ENCODE measurements at regions of chr12 and their contacts with region 1.

Region 1: GRCh38 chr12:95473884-95474659 is at the start of gene METAP2:
- DNase-seq: peak; percentile 97
- ATAC-seq: peak; percentile 97
- H3K4me3 Mint-ChIP-seq: peak within 1 kb of the TSS; percentile 88
- H3K27ac Mint-ChIP-seq: peak within 1 kb of the TSS; percentile 99
- H3K4me1 Mint-ChIP-seq: peaks cover 41% of the 10 kb centered on the region
- H3K27me3 Mint-ChIP-seq: no peaks in the 10 kb centered on the region
- CTCF ChIP-seq: no peak
- total RNA-seq, gene METAP2: 129 to 133 TPM

Region 2: GRCh38 chr12:95072900-95073697 is 401.0 kb before region 1 on chr12 and contains the start of gene NR2C1:
- CTCF ChIA-PET with region 1: no interaction called
- POLR2A ChIA-PET with region 1: interaction called, 12 read pairs
- intact Hi-C with region 1: no loop called
- DNase-seq: peak; percentile 43
- ATAC-seq: peak; percentile 99
- H3K4me3 Mint-ChIP-seq: peak within 1 kb of the TSS; percentile 90
- H3K27ac Mint-ChIP-seq: peak within 1 kb of the TSS; percentile 92
- H3K4me1 Mint-ChIP-seq: peaks cover 17% of the 10 kb centered on the region
- H3K27me3 Mint-ChIP-seq: no peaks in the 10 kb centered on the region
- CTCF ChIP-seq: no peak
- total RNA-seq, gene NR2C1: 24.9 to 32.4 TPM

Region 3: GRCh38 chr12:95217377-95218149 is 256.5 kb before region 1 on chr12 and contains the starts of genes FGD6 and VEZT:
- CTCF ChIA-PET with region 1: no interaction called
- POLR2A ChIA-PET with region 1: interaction called, 10 read pairs
- intact Hi-C with region 1: loop called (anchors 5 kb)
- DNase-seq: peak; percentile 99
- ATAC-seq: peak; percentile 95
- H3K4me3 Mint-ChIP-seq: peak within 1 kb of the TSS; percentile 89
- H3K27ac Mint-ChIP-seq: peak within 1 kb of the TSS; percentile 98
- H3K4me1 Mint-ChIP-seq: peaks cover 33% of the 10 kb centered on the region
- H3K27me3 Mint-ChIP-seq: peaks cover 6% of the 10 kb centered on the region
- CTCF ChIP-seq: peak; percentile 54
- total RNA-seq, gene FGD6: 0.41 to 0.54 TPM
- total RNA-seq, gene VEZT: 46.9 to 51.7 TPM

Region 4: GRCh38 chr12:95487024-95487423 is 13.0 kb after region 1 on chr12:
- CTCF ChIA-PET with region 1: no interaction called
- POLR2A ChIA-PET with region 1: interaction called, 11 read pairs
- intact Hi-C with region 1: no loop called
- DNase-seq: no peak
- ATAC-seq: no peak
- H3K4me3 Mint-ChIP-seq: no peak overlapping the region
- H3K27ac Mint-ChIP-seq: no peak overlapping the region
- H3K4me1 Mint-ChIP-seq: peaks cover 11% of the 10 kb centered on the region
- H3K27me3 Mint-ChIP-seq: no peaks in the 10 kb centered on the region
- CTCF ChIP-seq: no peak

Region 5: GRCh38 chr12:95498968-95499367 is 24.9 kb after region 1 on chr12:
- CTCF ChIA-PET with region 1: no interaction called
- POLR2A ChIA-PET with region 1: interaction called, 10 read pairs
- intact Hi-C with region 1: no loop called
- DNase-seq: no peak
- ATAC-seq: no peak
- H3K4me3 Mint-ChIP-seq: no peak overlapping the region
- H3K27ac Mint-ChIP-seq: peak overlapping the region; percentile 24
- H3K4me1 Mint-ChIP-seq: peaks cover 27% of the 10 kb centered on the region
- H3K27me3 Mint-ChIP-seq: no peaks in the 10 kb centered on the region
- CTCF ChIP-seq: no peak

Region 6: DNA sequence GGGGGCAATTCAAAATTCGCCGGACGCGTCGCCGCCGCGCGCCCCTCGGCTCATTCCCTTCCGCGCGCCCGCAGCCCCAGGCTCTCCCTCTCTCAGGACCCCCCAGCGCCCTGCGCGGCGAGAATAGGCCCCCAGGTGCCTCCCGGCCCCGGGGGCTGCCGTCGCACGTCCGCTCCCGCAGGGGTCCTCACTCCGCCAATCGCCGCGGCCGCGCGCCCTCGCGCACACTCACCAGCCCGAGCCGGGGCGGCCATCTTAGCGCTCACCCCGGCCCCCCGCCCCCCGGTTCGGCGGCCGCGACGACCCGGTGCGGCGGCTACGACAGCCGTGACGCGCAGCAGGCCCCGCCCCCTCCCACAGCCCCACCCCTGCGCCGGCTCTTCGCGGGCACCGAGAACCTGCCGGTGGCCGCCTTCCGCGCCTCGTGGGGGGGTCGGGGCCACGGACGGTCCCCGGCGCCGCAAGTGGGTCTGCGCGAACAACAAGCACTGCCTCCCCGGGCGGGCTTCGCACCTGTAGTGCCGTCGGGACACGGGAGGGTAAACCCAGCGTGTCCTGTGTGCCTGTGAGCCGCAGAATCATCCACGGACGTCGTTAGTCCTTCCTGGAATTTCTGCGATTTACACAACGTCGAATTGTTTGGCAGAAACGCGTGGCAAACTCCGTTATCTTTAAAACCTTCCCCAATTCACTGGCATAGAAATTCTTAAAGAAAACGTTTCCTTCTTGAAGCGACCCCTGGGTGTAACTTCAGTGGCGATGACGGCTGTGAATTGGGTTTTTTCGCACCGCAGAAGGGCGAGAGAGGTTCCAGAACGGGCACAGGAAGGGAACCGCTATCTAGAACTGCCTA is 74.7 kb after region 1 on chr12:
- CTCF ChIA-PET with region 1: no interaction called
- POLR2A ChIA-PET with region 1: interaction called, 10 read pairs
- intact Hi-C with region 1: no loop called
- DNase-seq: peak; percentile 71
- ATAC-seq: peak; percentile 69
- H3K4me3 Mint-ChIP-seq: peak overlapping the region; percentile 82
- H3K27ac Mint-ChIP-seq: peak overlapping the region; percentile 78
- H3K4me1 Mint-ChIP-seq: peaks cover 42% of the 10 kb centered on the region
- H3K27me3 Mint-ChIP-seq: peaks cover 5% of the 10 kb centered on the region
- CTCF ChIP-seq: no peak

Region 7: GRCh38 chr12:95608252-95609033 is 134.4 kb after region 1 on chr12:
- CTCF ChIA-PET with region 1: no interaction called
- POLR2A ChIA-PET with region 1: no interaction called
- intact Hi-C with region 1: no loop called
- DNase-seq: no peak
- ATAC-seq: no peak
- H3K4me3 Mint-ChIP-seq: no peak overlapping the region
- H3K27ac Mint-ChIP-seq: no peak overlapping the region
- H3K4me1 Mint-ChIP-seq: no peaks in the 10 kb centered on the region
- H3K27me3 Mint-ChIP-seq: no peaks in the 10 kb centered on the region
- CTCF ChIP-seq: no peak

Measured in activated CD8-positive, alpha-beta T cell treated with anti-CD3 and anti-CD28 coated beads for 36 hours (primary cell).